PC-9 (cell line): ENCODE measurements at regions of chr18 and their contacts with region 1.

Region 1: DNA sequence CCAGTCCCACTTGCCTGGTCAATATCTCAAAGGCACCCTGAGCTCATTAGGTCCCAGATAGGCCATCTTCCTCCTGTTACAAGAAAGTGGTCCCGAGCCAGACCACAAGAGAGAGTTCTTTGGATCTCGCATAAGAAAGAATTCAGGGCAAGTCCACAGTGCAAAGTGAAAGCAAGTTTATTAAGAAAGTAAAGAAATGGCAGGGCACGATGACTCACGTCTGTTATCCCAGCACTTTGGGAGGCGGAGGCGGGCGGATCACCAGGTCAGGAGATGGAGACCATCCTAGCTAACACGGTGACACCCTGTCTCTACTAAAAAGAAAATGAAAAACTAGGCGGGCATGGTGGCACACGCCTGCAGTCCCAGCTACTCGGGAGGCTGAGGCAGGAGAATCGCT is 10.8 kb upstream of the SMAD7 start:
- DNase-seq: no peak
- H3K4me3 ChIP-seq: no peak overlapping the region
- H3K27ac ChIP-seq: no peak overlapping the region
- H3K4me1 ChIP-seq: peaks cover 22% of the 10 kb centered on the region
- H3K27me3 ChIP-seq: no peaks in the 10 kb centered on the region
- CTCF ChIP-seq: no peak

Region 2: GRCh38 chr18:48997985-48998831 is 36.7 kb after region 1 on chr18:
- CTCF ChIA-PET with region 1: no interaction called
- POLR2A ChIA-PET with region 1: interaction called, 20 read pairs
- intact Hi-C with region 1: no loop called
- DNase-seq: peak; percentile 91 to 98
- H3K4me3 ChIP-seq: peak overlapping the region; percentile 32; the same call in 1 of the 2 replicates
- H3K27ac ChIP-seq: peak overlapping the region; percentile 97
- H3K4me1 ChIP-seq: peaks cover 60% of the 10 kb centered on the region
- H3K27me3 ChIP-seq: no peaks in the 10 kb centered on the region
- CTCF ChIP-seq: no peak